B cell (primary cell): ENCODE measurements at regions of chr21 and their contacts with region 1.

Region 1: GRCh38 chr21:36385233-36386030 is at the start of gene CHAF1B:
- DNase-seq: peak; percentile 87
- ATAC-seq: peak; percentile 98
- H3K4me3 ChIP-seq: peak within 1 kb of the TSS; percentile 53 to 67 (median 57)
- H3K4me3 Mint-ChIP-seq: peak within 1 kb of the TSS; percentile 92
- H3K27ac ChIP-seq: peak within 1 kb of the TSS in 1 of 2 donors; percentile 26
- H3K27ac Mint-ChIP-seq: peak within 1 kb of the TSS; percentile 53
- H3K4me1 ChIP-seq: peaks cover 4 to 9% of the 10 kb centered on the region in 2 donors
- H3K4me1 Mint-ChIP-seq: peaks cover 6% of the 10 kb centered on the region
- H3K27me3 ChIP-seq: no peaks in the 10 kb centered on the region
- H3K27me3 Mint-ChIP-seq: no peaks in the 10 kb centered on the region
- CTCF ChIP-seq: no peak
- total RNA-seq, gene CHAF1B: 1.9 and 2.2 TPM in 2 replicates

Region 2: DNA sequence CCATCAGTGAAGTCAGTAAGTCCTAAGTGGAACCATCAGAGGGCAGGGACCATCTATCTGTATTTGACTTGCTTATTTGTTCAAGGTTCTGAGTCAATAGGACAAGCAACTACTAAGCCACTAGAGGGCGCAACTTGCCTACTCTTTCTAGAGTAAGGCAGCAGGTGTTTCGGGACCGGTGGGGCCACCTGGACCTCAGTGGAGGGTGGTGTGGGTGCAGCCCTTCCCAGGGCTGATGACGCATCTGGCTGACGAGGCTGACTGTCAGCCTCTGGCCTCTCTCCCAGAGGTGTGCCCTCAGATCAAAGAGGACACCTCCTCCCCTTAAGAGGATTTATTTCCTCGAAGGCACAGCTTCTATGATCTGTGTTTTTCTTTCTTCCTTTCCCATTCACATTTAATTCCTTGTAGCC is 243.9 kb before region 1 on chr21:
- CTCF ChIA-PET with region 1: interaction called, 3 read pairs
- POLR2A ChIA-PET with region 1: interaction called, 12 read pairs
- intact Hi-C with region 1: loop called (anchors 5 kb)
- DNase-seq: peak; percentile 93
- ATAC-seq: peak; percentile 95
- H3K4me3 ChIP-seq: no peak overlapping the region
- H3K4me3 Mint-ChIP-seq: no peak overlapping the region
- H3K27ac ChIP-seq: peak overlapping the region in 1 of 2 donors; percentile 18
- H3K27ac Mint-ChIP-seq: no peak overlapping the region
- H3K4me1 ChIP-seq: peaks cover 19 to 29% of the 10 kb centered on the region in 2 donors
- H3K4me1 Mint-ChIP-seq: peaks cover 24% of the 10 kb centered on the region
- H3K27me3 ChIP-seq: no peaks in the 10 kb centered on the region
- H3K27me3 Mint-ChIP-seq: no peaks in the 10 kb centered on the region
- CTCF ChIP-seq: peak; percentile 93

Region 3: DNA sequence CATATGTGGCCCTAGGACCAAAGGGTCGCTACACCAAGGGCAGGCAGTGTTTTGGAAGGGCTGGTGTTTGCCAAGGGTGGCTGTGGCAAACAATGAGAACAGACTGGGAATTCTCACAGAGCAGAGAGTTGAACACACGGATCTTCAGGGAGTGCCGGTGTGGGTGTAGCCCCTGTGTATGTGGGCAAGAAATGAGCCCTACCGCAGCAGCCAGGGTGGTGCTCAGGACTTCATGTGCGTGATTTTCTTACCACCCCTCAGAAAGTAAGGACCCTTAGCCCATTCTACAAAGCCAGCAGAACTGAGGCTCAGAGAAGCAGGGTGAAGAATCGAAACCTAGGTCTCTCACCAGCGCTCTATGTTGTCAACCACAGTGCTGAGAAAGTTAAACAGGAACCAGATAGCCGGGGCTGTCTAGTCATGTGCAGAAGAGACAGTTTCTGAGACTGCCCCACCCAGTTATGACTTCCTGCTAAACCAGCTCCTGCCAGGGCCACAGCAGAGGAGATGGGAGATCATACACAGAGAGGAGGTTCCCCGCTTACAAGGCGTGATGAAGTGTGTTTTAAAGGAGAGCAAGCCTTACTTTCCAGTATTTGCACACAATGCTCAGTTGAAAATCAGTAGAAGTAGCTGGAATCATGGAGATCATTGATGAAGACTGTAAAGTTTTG is 87.4 kb before region 1 on chr21:
- CTCF ChIA-PET with region 1: no interaction called
- POLR2A ChIA-PET with region 1: no interaction called
- intact Hi-C with region 1: loop called (anchors 1 kb)
- DNase-seq: peak; percentile 92
- ATAC-seq: peak; percentile 88
- H3K4me3 ChIP-seq: peak overlapping the region in 4 of 5 experiments; percentile 5 to 53 (median 29)
- H3K4me3 Mint-ChIP-seq: peak overlapping the region; percentile 80
- H3K27ac ChIP-seq: peak overlapping the region; percentile 94 to 97
- H3K27ac Mint-ChIP-seq: peak overlapping the region; percentile 97
- H3K4me1 ChIP-seq: peaks cover 52 to 71% of the 10 kb centered on the region in 2 donors
- H3K4me1 Mint-ChIP-seq: peaks cover 53% of the 10 kb centered on the region
- H3K27me3 ChIP-seq: no peaks in the 10 kb centered on the region
- H3K27me3 Mint-ChIP-seq: no peaks in the 10 kb centered on the region
- CTCF ChIP-seq: no peak

Region 4: GRCh38 chr21:36429947-36430546 is 44.6 kb after region 1 on chr21:
- CTCF ChIA-PET with region 1: no interaction called
- POLR2A ChIA-PET with region 1: no interaction called
- intact Hi-C with region 1: no loop called
- DNase-seq: peak; percentile 62
- ATAC-seq: peak; percentile 94
- H3K4me3 ChIP-seq: peak overlapping the region in 4 of 5 experiments; percentile 0 to 50 (median 40)
- H3K4me3 Mint-ChIP-seq: peak overlapping the region; percentile 88
- H3K27ac ChIP-seq: no peak overlapping the region
- H3K27ac Mint-ChIP-seq: peak overlapping the region; percentile 95
- H3K4me1 ChIP-seq: peaks cover 12 to 13% of the 10 kb centered on the region in 2 donors
- H3K4me1 Mint-ChIP-seq: peaks cover 20% of the 10 kb centered on the region
- H3K27me3 ChIP-seq: peaks cover 0 to 22% (median 5%) of the 10 kb centered on the region in 4 experiments
- H3K27me3 Mint-ChIP-seq: peaks cover 36% of the 10 kb centered on the region
- CTCF ChIP-seq: no peak